ENCODE measurements at regions of chr11 and their contacts with region 1.

Region 1: GRCh38 chr11:64916775-64917662 is at the start of gene ATG2A:
- DNase-seq: peak; percentile 99
- H3K4me3 Mint-ChIP-seq: peak within 1 kb of the TSS; percentile 90
- H3K27ac Mint-ChIP-seq: peak within 1 kb of the TSS; percentile 98
- H3K4me1 Mint-ChIP-seq: peaks cover 6% of the 10 kb centered on the region
- H3K27me3 Mint-ChIP-seq: no peaks in the 10 kb centered on the region
- CTCF ChIP-seq: no peak
- total RNA-seq, gene ATG2A: 28.7 and 29.9 TPM in 2 replicates

Region 2: GRCh38 chr11:64810271-64810890 is 106.6 kb before region 1 on chr11 and contains the start of gene MEN1:
- CTCF ChIA-PET with region 1: no interaction called
- POLR2A ChIA-PET with region 1: interaction called, 10 read pairs
- intact Hi-C with region 1: no loop called
- DNase-seq: peak; percentile 95
- H3K4me3 Mint-ChIP-seq: peak within 1 kb of the TSS; percentile 99
- H3K27ac Mint-ChIP-seq: peak within 1 kb of the TSS; percentile 93
- H3K4me1 Mint-ChIP-seq: peaks cover 10% of the 10 kb centered on the region
- H3K27me3 Mint-ChIP-seq: no peaks in the 10 kb centered on the region
- CTCF ChIP-seq: no peak
- total RNA-seq, gene MEN1: 29.2 and 33.1 TPM in 2 replicates

Region 3: GRCh38 chr11:64894070-64894796 is 22.8 kb before region 1 on chr11:
- CTCF ChIA-PET with region 1: interaction called, 16 read pairs
- POLR2A ChIA-PET with region 1: interaction called, 6 read pairs
- intact Hi-C with region 1: no loop called
- DNase-seq: peak; percentile 79
- H3K4me3 Mint-ChIP-seq: no peak overlapping the region
- H3K27ac Mint-ChIP-seq: no peak overlapping the region
- H3K4me1 Mint-ChIP-seq: no peaks in the 10 kb centered on the region
- H3K27me3 Mint-ChIP-seq: no peaks in the 10 kb centered on the region
- CTCF ChIP-seq: peak; percentile 91

Region 4: GRCh38 chr11:64996710-64997380 is 79.8 kb after region 1 on chr11 and contains the start of gene BATF2:
- CTCF ChIA-PET with region 1: interaction called, 4 read pairs
- POLR2A ChIA-PET with region 1: interaction called, 10 read pairs
- intact Hi-C with region 1: no loop called
- DNase-seq: peak; percentile 70
- H3K4me3 Mint-ChIP-seq: peak within 1 kb of the TSS; percentile 60
- H3K27ac Mint-ChIP-seq: no peak within 1 kb of the TSS
- H3K4me1 Mint-ChIP-seq: peaks cover 12% of the 10 kb centered on the region
- H3K27me3 Mint-ChIP-seq: no peaks in the 10 kb centered on the region
- CTCF ChIP-seq: peak; percentile 37
- total RNA-seq, gene BATF2: 1.3 and 1.6 TPM in 2 replicates

Region 5: GRCh38 chr11:65003282-65003681 is 86.3 kb after region 1 on chr11:
- CTCF ChIA-PET with region 1: interaction called, 5 read pairs
- POLR2A ChIA-PET with region 1: interaction called, 16 read pairs
- intact Hi-C with region 1: loop called (anchors 2 kb)
- DNase-seq: no peak
- H3K4me3 Mint-ChIP-seq: no peak overlapping the region
- H3K27ac Mint-ChIP-seq: no peak overlapping the region
- H3K4me1 Mint-ChIP-seq: no peaks in the 10 kb centered on the region
- H3K27me3 Mint-ChIP-seq: no peaks in the 10 kb centered on the region
- CTCF ChIP-seq: no peak

Region 6: GRCh38 chr11:65027213-65028067 is 110.4 kb after region 1 on chr11 and contains the start of gene SNX15:
- CTCF ChIA-PET with region 1: interaction called, 3 read pairs
- POLR2A ChIA-PET with region 1: interaction called, 5 read pairs
- intact Hi-C with region 1: loop called (anchors 5 kb)
- DNase-seq: peak; percentile 97
- H3K4me3 Mint-ChIP-seq: peak within 1 kb of the TSS; percentile 75
- H3K27ac Mint-ChIP-seq: peak within 1 kb of the TSS; percentile 30
- H3K4me1 Mint-ChIP-seq: peaks cover 7% of the 10 kb centered on the region
- H3K27me3 Mint-ChIP-seq: no peaks in the 10 kb centered on the region
- CTCF ChIP-seq: peak; percentile 71
- total RNA-seq, gene SNX15: 18.0 and 21.0 TPM in 2 replicates

Region 7: GRCh38 chr11:65117216-65118096 is 200.4 kb after region 1 on chr11 and contains the start of gene ZNHIT2:
- CTCF ChIA-PET with region 1: no interaction called
- POLR2A ChIA-PET with region 1: interaction called, 5 read pairs
- intact Hi-C with region 1: loop called (anchors 10 kb)
- DNase-seq: peak; percentile 99
- H3K4me3 Mint-ChIP-seq: peak within 1 kb of the TSS; percentile 82
- H3K27ac Mint-ChIP-seq: peak within 1 kb of the TSS; percentile 88
- H3K4me1 Mint-ChIP-seq: peaks cover 16% of the 10 kb centered on the region
- H3K27me3 Mint-ChIP-seq: no peaks in the 10 kb centered on the region
- CTCF ChIP-seq: peak; percentile 84
- total RNA-seq, gene ZNHIT2: 22.0 and 23.6 TPM in 2 replicates